Dorsolateral prefrontal cortex (tissue), 120 donors: ENCODE measurements at regions of chr1 and their contacts with region 1.

Region 1: GRCh38 chr1:9388335-9389180 is 95.9 kb downstream of the SPSB1 start:
- DNase-seq: peak; percentile 28 to 96 (median 92)
- H3K4me3 ChIP-seq: peak overlapping the region in 6 of 59 donors; percentile 2 to 43 (median 10)
- H3K27ac ChIP-seq: peak overlapping the region; percentile 29 to 100 (median 97)
- H3K27me3 ChIP-seq: no peaks in the 10 kb centered on the region
- CTCF ChIP-seq: peak in 5 of 56 donors; percentile 7 to 32 (median 15)

Region 2: DNA sequence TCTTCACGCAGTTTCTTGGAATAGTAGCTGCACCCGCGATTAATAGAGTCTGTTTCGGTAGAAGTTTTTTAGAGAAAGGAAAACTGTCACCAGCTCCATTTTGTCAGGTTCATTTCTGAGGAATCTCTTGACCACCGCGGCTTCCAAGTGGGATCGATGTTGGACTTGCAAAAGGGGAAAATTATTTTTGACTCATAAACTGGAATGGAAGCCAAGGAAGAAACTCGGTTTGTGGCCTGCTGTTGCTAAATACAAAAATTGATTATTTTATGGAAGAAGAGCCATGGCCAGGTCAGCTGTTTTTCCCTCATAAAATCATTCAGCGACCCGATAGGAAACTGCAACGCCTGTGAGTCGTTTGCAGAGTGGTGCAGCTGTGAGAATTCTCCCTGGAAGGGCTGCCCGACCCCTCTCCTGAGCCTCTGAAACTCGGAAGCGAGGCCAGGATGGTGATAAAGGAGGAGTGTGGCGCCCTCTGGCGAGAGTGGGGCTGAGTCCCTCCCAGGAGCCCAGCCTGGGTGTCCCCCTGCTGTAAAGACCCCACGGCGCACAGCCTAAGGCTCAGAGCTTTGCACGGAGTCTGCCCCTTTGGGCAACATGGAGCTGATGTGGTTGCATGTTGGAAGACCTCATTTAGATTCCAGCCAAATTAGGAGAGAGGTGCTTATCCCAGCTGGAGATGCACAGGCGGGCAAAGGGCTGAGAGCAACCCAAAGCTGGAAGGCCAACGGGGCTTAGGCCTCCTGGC is 67.1 kb after region 1 on chr1:
- intact Hi-C with region 1: loop called in 1 of 2 experiments (anchors 1 kb)
- DNase-seq: peak; percentile 17 to 79 (median 66)
- H3K4me3 ChIP-seq: no peak overlapping the region
- H3K27ac ChIP-seq: peak overlapping the region in 1 of 59 donors; percentile 24
- H3K27me3 ChIP-seq: no peaks in the 10 kb centered on the region
- CTCF ChIP-seq: peak; percentile 35 to 97 (median 85)